ENCODE measurements at regions of chr6 and their contacts with region 1.

Region 1: DNA sequence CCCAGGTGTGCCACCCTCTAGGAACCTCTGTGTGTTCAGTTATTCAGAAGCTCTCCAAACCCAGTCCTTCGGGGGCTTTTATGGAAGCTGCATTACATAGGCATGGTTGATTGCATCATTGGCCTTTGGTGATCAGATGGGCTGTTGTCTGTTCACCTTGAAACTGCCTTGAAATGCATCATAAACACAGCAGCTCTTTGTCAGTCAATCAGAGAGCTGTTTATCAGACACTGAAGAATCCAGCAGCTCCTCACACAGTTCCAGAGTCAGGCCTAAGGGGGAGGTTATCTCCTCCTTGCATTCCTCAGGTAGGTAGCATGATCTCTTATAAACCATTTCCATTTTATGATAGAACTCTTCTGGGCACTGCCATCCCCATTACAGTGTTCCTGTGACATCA is 62.4 kb downstream of the E2F3 start:
- DNase-seq: no peak
- H3K4me3 ChIP-seq: no peak overlapping the region
- H3K27ac ChIP-seq: no peak overlapping the region
- H3K4me1 ChIP-seq: no peaks in the 10 kb centered on the region
- H3K27me3 ChIP-seq: no peaks in the 10 kb centered on the region
- CTCF ChIP-seq: no peak

Region 2: GRCh38 chr6:20202324-20202658 is 261.8 kb before region 1 on chr6:
- CTCF ChIA-PET with region 1: no interaction called
- POLR2A ChIA-PET with region 1: no interaction called
- intact Hi-C with region 1: no loop called
- DNase-seq: no peak
- H3K4me3 ChIP-seq: no peak overlapping the region
- H3K27ac ChIP-seq: peak overlapping the region; percentile 89
- H3K4me1 ChIP-seq: peaks cover 16% of the 10 kb centered on the region
- H3K27me3 ChIP-seq: no peaks in the 10 kb centered on the region
- CTCF ChIP-seq: no peak

Region 3: DNA sequence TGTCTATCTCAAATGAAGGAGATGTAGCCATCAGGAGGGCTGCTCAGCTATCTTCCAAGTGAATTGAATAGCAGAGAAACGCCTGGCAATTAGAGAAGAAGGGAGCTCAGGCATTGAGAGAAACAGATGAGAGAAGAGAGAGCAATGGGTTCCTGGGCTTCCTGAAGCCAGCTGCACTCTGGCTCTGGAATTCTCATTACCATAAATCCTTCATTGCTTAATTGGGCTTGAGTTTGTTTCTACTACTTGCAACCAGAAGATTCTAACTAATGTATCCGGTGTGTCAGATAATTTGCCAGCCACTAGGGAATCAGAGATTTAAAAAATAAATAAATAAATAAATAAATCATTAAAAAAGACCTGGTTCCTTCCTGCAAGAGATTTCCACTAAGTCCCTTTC is 45.1 kb after region 1 on chr6:
- CTCF ChIA-PET with region 1: no interaction called
- POLR2A ChIA-PET with region 1: interaction called, 14 read pairs
- intact Hi-C with region 1: no loop called
- DNase-seq: no peak
- H3K4me3 ChIP-seq: no peak overlapping the region
- H3K27ac ChIP-seq: no peak overlapping the region
- H3K4me1 ChIP-seq: no peaks in the 10 kb centered on the region
- H3K27me3 ChIP-seq: no peaks in the 10 kb centered on the region
- CTCF ChIP-seq: no peak

Region 4: GRCh38 chr6:20542927-20543602 is 79.0 kb after region 1 on chr6:
- CTCF ChIA-PET with region 1: no interaction called
- POLR2A ChIA-PET with region 1: no interaction called
- intact Hi-C with region 1: no loop called
- DNase-seq: peak in 1 of 2 experiments; percentile 90
- H3K4me3 ChIP-seq: no peak overlapping the region
- H3K27ac ChIP-seq: peak overlapping the region; percentile 65
- H3K4me1 ChIP-seq: peaks cover 16% of the 10 kb centered on the region
- H3K27me3 ChIP-seq: no peaks in the 10 kb centered on the region
- CTCF ChIP-seq: no peak